Activated T-helper 2 cell treated with anti-CD3 and anti-CD28 coated beads, Interferon-gamma antibody, Interleukin-2, Interleukin-4, amounts not matched to agents 10 μg/mL and 5 μg/mL and 100 μg/mL, durations not matched to agents 14 hours and 24 hours and 36 hours (primary cell): ENCODE measurements at regions of chr12 and their contacts with region 1.

Region 1: DNA sequence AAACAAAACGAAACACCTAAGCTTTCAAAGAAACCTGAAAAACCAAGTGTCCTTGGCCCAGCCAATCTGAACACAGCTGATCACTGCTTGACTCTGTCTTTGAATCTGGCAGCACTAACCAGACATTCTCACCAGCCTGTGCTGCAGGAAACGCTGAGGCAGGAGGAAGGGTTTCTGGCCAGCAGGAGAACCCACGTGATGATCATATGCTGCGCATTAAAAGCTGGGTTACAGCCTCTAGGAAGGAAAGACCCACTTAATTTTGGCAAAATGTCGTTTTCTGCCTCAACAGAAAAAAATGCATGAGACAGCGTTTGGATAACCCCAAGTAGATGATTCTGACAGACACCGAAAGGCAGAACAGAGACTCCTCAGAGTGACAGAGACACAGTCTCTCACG is 9.8 kb downstream of the APPL2 start:
- DNase-seq: peak; percentile 21
- H3K4me3 Mint-ChIP-seq: no peak overlapping the region
- H3K27ac Mint-ChIP-seq: peak overlapping the region; percentile 51
- H3K4me1 Mint-ChIP-seq: peaks cover 51% of the 10 kb centered on the region
- H3K27me3 Mint-ChIP-seq: no peaks in the 10 kb centered on the region

Region 2: GRCh38 chr12:105279460-105280056 is 53.3 kb after region 1 on chr12:
- intact Hi-C with region 1: loop called (anchors 5 kb)
- DNase-seq: peak; percentile 30
- H3K4me3 Mint-ChIP-seq: no peak overlapping the region
- H3K27ac Mint-ChIP-seq: no peak overlapping the region
- H3K4me1 Mint-ChIP-seq: peaks cover 13% of the 10 kb centered on the region
- H3K27me3 Mint-ChIP-seq: no peaks in the 10 kb centered on the region

Region 3: GRCh38 chr12:105337391-105337790 is 111.2 kb after region 1 on chr12:
- intact Hi-C with region 1: loop called (anchors 2 kb)
- DNase-seq: no peak
- H3K4me3 Mint-ChIP-seq: peak overlapping the region; percentile 26
- H3K27ac Mint-ChIP-seq: peak overlapping the region; percentile 98
- H3K4me1 Mint-ChIP-seq: peaks cover 67% of the 10 kb centered on the region
- H3K27me3 Mint-ChIP-seq: no peaks in the 10 kb centered on the region